CD8-positive, alpha-beta T cell (primary cell): ENCODE measurements at regions of chr7 and their contacts with region 1.

Region 1: DNA sequence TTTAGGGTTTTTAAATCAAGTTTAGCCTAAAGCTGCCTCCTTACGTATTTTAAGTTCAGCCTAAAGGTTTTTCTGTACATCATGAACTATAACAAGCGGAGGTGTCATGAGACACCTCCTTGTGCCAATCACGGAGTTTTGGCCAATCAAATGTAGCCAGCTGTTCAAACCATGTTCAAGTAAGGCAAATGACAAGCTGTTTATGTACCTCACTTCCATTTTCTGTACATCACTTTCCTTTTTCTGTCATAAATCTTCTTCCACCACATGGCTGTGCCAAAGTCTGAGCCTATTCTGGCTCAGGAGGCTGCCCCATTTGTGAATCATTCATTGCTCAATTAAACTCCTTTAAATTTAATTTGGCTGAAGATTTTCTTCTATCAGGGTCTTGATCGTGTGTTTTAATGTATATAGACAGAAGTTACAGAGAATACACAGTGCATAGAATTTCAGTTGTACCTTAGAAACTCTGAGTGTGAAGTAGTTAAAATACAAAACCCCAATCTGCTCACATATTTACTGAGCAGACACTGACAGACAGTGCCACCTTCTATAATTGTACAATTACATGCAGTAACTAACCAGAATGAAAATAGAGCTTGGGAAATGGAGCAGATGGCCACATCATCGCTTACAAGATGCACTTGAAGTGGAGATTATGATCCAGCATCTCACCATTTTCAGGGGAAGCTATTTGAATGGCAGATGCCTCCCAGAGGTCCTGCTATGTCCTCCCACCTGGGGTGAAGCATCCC is 76.9 kb upstream of the LANCL2 start:
- DNase-seq: peak in 1 of 9 experiments; percentile 37
- ATAC-seq: no peak
- H3K4me3 ChIP-seq: no peak overlapping the region
- H3K4me3 Mint-ChIP-seq: no peak overlapping the region
- H3K27ac ChIP-seq: no peak overlapping the region
- H3K27ac Mint-ChIP-seq: no peak overlapping the region
- H3K4me1 ChIP-seq: no peaks in the 10 kb centered on the region
- H3K4me1 Mint-ChIP-seq: no peaks in the 10 kb centered on the region
- H3K27me3 ChIP-seq: no peaks in the 10 kb centered on the region
- H3K27me3 Mint-ChIP-seq: peaks cover 5% of the 10 kb centered on the region
- CTCF ChIP-seq: no peak

Region 2: GRCh38 chr7:53877688-53878087 is 1410.6 kb before region 1 on chr7:
- CTCF ChIA-PET with region 1: no interaction called
- POLR2A ChIA-PET with region 1: no interaction called
- intact Hi-C with region 1: no loop called
- DNase-seq: no peak
- ATAC-seq: no peak
- H3K4me3 ChIP-seq: no peak overlapping the region
- H3K4me3 Mint-ChIP-seq: no peak overlapping the region
- H3K27ac ChIP-seq: no peak overlapping the region
- H3K27ac Mint-ChIP-seq: no peak overlapping the region
- H3K4me1 ChIP-seq: no peaks in the 10 kb centered on the region
- H3K4me1 Mint-ChIP-seq: no peaks in the 10 kb centered on the region
- H3K27me3 ChIP-seq: no peaks in the 10 kb centered on the region
- H3K27me3 Mint-ChIP-seq: no peaks in the 10 kb centered on the region
- CTCF ChIP-seq: no peak

Region 3: DNA sequence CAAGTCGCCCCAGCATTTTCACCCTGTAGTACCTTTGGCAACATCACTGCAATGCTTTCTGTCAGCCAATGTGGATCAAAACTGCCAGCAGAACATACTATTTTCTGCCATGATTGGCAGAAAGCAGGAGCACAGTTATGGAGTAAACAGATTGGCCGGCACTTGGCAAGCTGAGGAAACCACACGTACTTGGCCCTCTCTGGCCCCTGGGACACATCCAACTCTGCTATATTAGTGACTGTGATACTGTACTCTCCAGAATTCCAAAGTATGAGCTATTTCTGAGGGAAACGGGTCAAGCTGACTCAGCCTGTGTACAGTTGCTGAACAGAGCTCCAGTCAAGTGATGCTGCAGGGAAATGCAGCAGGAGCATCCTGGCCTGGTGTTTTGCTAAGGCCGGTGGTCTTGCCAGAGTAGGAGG is 37.1 kb after region 1 on chr7:
- CTCF ChIA-PET with region 1: no interaction called
- POLR2A ChIA-PET with region 1: no interaction called
- intact Hi-C with region 1: no loop called
- DNase-seq: no peak
- ATAC-seq: no peak
- H3K4me3 ChIP-seq: no peak overlapping the region
- H3K4me3 Mint-ChIP-seq: no peak overlapping the region
- H3K27ac ChIP-seq: no peak overlapping the region
- H3K27ac Mint-ChIP-seq: no peak overlapping the region
- H3K4me1 ChIP-seq: no peaks in the 10 kb centered on the region
- H3K4me1 Mint-ChIP-seq: no peaks in the 10 kb centered on the region
- H3K27me3 ChIP-seq: no peaks in the 10 kb centered on the region
- H3K27me3 Mint-ChIP-seq: peaks cover 6% of the 10 kb centered on the region
- CTCF ChIP-seq: no peak

Region 4: GRCh38 chr7:55415173-55415778 is 127.0 kb after region 1 on chr7:
- CTCF ChIA-PET with region 1: interaction called, 105 read pairs
- POLR2A ChIA-PET with region 1: no interaction called
- intact Hi-C with region 1: no loop called
- DNase-seq: peak; percentile 61 to 86 (median 84)
- ATAC-seq: peak; percentile 100
- H3K4me3 ChIP-seq: no peak overlapping the region
- H3K4me3 Mint-ChIP-seq: no peak overlapping the region
- H3K27ac ChIP-seq: no peak overlapping the region
- H3K27ac Mint-ChIP-seq: no peak overlapping the region
- H3K4me1 ChIP-seq: no peaks in the 10 kb centered on the region
- H3K4me1 Mint-ChIP-seq: no peaks in the 10 kb centered on the region
- H3K27me3 ChIP-seq: no peaks in the 10 kb centered on the region
- H3K27me3 Mint-ChIP-seq: no peaks in the 10 kb centered on the region
- CTCF ChIP-seq: peak; percentile 94